ENCODE measurements at regions of chr11 and their contacts with region 1.

Region 1: GRCh38 chr11:75280227-75280701 is 39.7 kb downstream of the TPBGL start:
- DNase-seq: peak; percentile 57 to 74 (median 69)
- H3K4me3 ChIP-seq: no peak overlapping the region
- H3K4me3 Mint-ChIP-seq: peak overlapping the region in 2 of 8 donors; percentile 53 to 54
- H3K27ac ChIP-seq: no peak overlapping the region
- H3K27ac Mint-ChIP-seq: peak overlapping the region; percentile 68 to 95 (median 91)
- H3K4me1 ChIP-seq: peaks cover 37% of the 10 kb centered on the region
- H3K4me1 Mint-ChIP-seq: peaks cover 33 to 50% (median 43%) of the 10 kb centered on the region in 4 donors
- H3K27me3 ChIP-seq: no peaks in the 10 kb centered on the region
- H3K27me3 Mint-ChIP-seq: no peaks in the 10 kb centered on the region

Region 2: GRCh38 chr11:75142714-75143419 is 137.4 kb before region 1 on chr11:
- CTCF ChIA-PET with region 1: interaction called, 304 read pairs
- POLR2A ChIA-PET with region 1: interaction called, 22 read pairs
- intact Hi-C with region 1: no loop called
- DNase-seq: peak; percentile 44 to 88 (median 57)
- H3K4me3 ChIP-seq: no peak overlapping the region
- H3K4me3 Mint-ChIP-seq: peak overlapping the region in 7 of 8 donors; percentile 58 to 75 (median 73)
- H3K27ac ChIP-seq: peak overlapping the region; percentile 22
- H3K27ac Mint-ChIP-seq: peak overlapping the region; percentile 45 to 93 (median 89)
- H3K4me1 ChIP-seq: peaks cover 37% of the 10 kb centered on the region
- H3K4me1 Mint-ChIP-seq: peaks cover 25 to 40% (median 34%) of the 10 kb centered on the region in 4 donors
- H3K27me3 ChIP-seq: no peaks in the 10 kb centered on the region
- H3K27me3 Mint-ChIP-seq: peaks cover 0 to 1% of the 10 kb centered on the region in 2 donors

Region 3: DNA sequence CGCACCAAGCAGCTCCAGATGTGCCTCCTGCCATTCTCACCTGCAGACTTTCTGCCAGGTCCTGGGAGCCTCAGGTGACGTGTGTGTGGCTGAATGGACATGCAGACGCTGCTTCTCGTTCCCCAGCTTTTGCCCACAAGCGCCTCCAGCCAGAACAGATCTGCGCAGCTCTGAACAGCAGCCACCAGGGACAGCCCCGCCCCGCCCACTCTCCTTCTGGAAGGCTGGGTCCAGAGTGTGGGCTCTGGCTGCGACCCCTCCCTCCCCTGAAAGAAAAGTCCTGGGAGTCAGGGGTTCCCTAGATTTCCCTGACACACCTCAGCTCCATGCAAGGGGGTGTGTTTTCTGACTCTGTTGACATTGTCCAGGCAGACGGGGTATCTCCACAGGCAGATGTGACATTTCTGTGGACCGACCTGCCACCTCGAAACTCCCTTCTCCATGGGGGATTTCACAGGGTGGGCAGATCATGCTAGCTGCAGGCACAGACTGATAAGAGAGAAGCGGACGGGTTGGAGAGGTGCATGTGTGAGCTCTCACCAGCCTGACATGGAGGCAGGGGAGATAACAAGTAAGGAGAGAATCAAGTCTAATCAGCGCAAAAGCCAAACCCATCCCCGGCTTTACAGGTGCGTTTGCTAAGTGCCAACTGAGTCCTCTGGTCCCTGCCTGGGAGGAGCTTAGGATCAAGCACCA is 109.6 kb before region 1 on chr11:
- CTCF ChIA-PET with region 1: no interaction called
- POLR2A ChIA-PET with region 1: no interaction called
- intact Hi-C with region 1: no loop called
- DNase-seq: no peak
- H3K4me3 ChIP-seq: no peak overlapping the region
- H3K4me3 Mint-ChIP-seq: no peak overlapping the region
- H3K27ac ChIP-seq: no peak overlapping the region
- H3K27ac Mint-ChIP-seq: no peak overlapping the region
- H3K4me1 ChIP-seq: peaks cover 13% of the 10 kb centered on the region
- H3K4me1 Mint-ChIP-seq: peaks cover 11 to 18% (median 13%) of the 10 kb centered on the region in 4 donors
- H3K27me3 ChIP-seq: no peaks in the 10 kb centered on the region
- H3K27me3 Mint-ChIP-seq: peaks cover 0 to 2% of the 10 kb centered on the region in 2 donors

Region 4: DNA sequence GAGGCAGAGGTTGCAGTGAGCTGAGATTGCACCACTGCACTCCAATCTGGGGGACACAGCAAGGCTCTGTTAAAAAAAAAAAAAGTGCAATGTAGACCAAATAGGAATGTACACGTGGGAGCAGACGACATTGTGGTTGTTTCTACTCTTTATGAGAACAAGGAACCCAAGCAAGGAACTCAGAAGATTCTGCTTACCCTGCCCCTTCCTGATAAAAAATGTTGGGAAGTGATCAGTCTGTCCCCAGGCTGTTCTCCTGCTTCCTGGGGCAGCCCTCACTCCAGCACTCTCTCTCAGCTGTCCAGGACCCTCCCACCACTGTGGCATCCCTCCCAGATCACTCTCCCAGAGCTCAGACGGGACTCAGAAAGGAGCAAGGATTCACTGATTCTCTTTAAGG is 97.6 kb before region 1 on chr11:
- CTCF ChIA-PET with region 1: no interaction called
- POLR2A ChIA-PET with region 1: no interaction called
- intact Hi-C with region 1: no loop called
- DNase-seq: no peak
- H3K4me3 ChIP-seq: no peak overlapping the region
- H3K4me3 Mint-ChIP-seq: no peak overlapping the region
- H3K27ac ChIP-seq: no peak overlapping the region
- H3K27ac Mint-ChIP-seq: no peak overlapping the region
- H3K4me1 ChIP-seq: no peaks in the 10 kb centered on the region
- H3K4me1 Mint-ChIP-seq: no peaks in the 10 kb centered on the region
- H3K27me3 ChIP-seq: no peaks in the 10 kb centered on the region
- H3K27me3 Mint-ChIP-seq: peaks cover 7% of the 10 kb centered on the region in 2 donors

Region 5: GRCh38 chr11:75263944-75264349 is 16.3 kb before region 1 on chr11:
- CTCF ChIA-PET with region 1: interaction called, 55 read pairs
- POLR2A ChIA-PET with region 1: interaction called, 70 read pairs
- intact Hi-C with region 1: no loop called
- DNase-seq: peak in 1 of 5 donors; percentile 40
- H3K4me3 ChIP-seq: no peak overlapping the region
- H3K4me3 Mint-ChIP-seq: peak overlapping the region in 1 of 8 donors; percentile 11
- H3K27ac ChIP-seq: no peak overlapping the region
- H3K27ac Mint-ChIP-seq: peak overlapping the region; percentile 2 to 75 (median 50)
- H3K4me1 ChIP-seq: peaks cover 39% of the 10 kb centered on the region
- H3K4me1 Mint-ChIP-seq: peaks cover 26 to 60% (median 40%) of the 10 kb centered on the region in 4 donors
- H3K27me3 ChIP-seq: no peaks in the 10 kb centered on the region
- H3K27me3 Mint-ChIP-seq: no peaks in the 10 kb centered on the region

Region 6: GRCh38 chr11:75342903-75343870 is 62.9 kb after region 1 on chr11:
- CTCF ChIA-PET with region 1: interaction called, 18 read pairs
- POLR2A ChIA-PET with region 1: interaction called, 50 read pairs
- intact Hi-C with region 1: no loop called
- DNase-seq: no peak
- H3K4me3 ChIP-seq: no peak overlapping the region
- H3K4me3 Mint-ChIP-seq: peak overlapping the region in 2 of 8 donors; percentile 13 to 31
- H3K27ac ChIP-seq: no peak overlapping the region
- H3K27ac Mint-ChIP-seq: peak overlapping the region; percentile 63 to 93 (median 90)
- H3K4me1 ChIP-seq: peaks cover 98% of the 10 kb centered on the region
- H3K4me1 Mint-ChIP-seq: peaks cover 56 to 100% (median 81%) of the 10 kb centered on the region in 4 donors
- H3K27me3 ChIP-seq: no peaks in the 10 kb centered on the region
- H3K27me3 Mint-ChIP-seq: no peaks in the 10 kb centered on the region

Region 7: DNA sequence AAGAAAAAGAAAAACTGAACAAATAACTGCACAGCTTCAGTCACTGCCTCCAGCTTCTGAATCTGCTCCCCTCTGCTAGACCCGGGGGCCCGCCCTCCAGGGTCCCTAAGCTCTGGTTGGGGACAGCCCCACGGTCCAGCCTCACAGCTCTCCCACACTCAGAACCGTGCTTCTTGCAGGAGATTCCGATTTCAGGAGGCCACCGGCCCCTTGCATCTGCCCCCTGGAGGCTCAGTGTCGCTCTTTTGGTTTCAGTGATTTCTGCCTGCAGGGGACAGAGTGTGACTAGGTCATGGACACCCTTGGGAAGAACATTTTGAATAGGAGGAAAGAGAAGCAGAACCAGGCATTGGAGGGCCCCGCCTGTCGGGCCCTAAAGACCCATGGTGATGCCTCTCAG is 95.9 kb after region 1 on chr11:
- CTCF ChIA-PET with region 1: interaction called, 614 read pairs
- POLR2A ChIA-PET with region 1: interaction called, 118 read pairs
- intact Hi-C with region 1: no loop called
- DNase-seq: no peak
- H3K4me3 ChIP-seq: no peak overlapping the region
- H3K4me3 Mint-ChIP-seq: no peak overlapping the region
- H3K27ac ChIP-seq: no peak overlapping the region
- H3K27ac Mint-ChIP-seq: peak overlapping the region in 1 of 7 donors; percentile 27
- H3K4me1 ChIP-seq: no peaks in the 10 kb centered on the region
- H3K4me1 Mint-ChIP-seq: peaks cover 0 to 4% (median 1%) of the 10 kb centered on the region in 4 donors
- H3K27me3 ChIP-seq: no peaks in the 10 kb centered on the region
- H3K27me3 Mint-ChIP-seq: no peaks in the 10 kb centered on the region

Region 8: GRCh38 chr11:75406338-75406777 is 126.1 kb after region 1 on chr11:
- CTCF ChIA-PET with region 1: interaction called, 19 read pairs
- POLR2A ChIA-PET with region 1: interaction called, 34 read pairs
- intact Hi-C with region 1: no loop called
- DNase-seq: no peak
- H3K4me3 ChIP-seq: no peak overlapping the region
- H3K4me3 Mint-ChIP-seq: no peak overlapping the region
- H3K27ac ChIP-seq: no peak overlapping the region
- H3K27ac Mint-ChIP-seq: peak overlapping the region in 2 of 7 donors; percentile 42 to 68
- H3K4me1 ChIP-seq: peaks cover 36% of the 10 kb centered on the region
- H3K4me1 Mint-ChIP-seq: peaks cover 30 to 53% (median 36%) of the 10 kb centered on the region in 4 donors
- H3K27me3 ChIP-seq: no peaks in the 10 kb centered on the region
- H3K27me3 Mint-ChIP-seq: no peaks in the 10 kb centered on the region

Measured in CD4-positive, alpha-beta memory T cell (primary cell).